Calu3 (cell line): ENCODE measurements at regions of chr10 and their contacts with region 1.

Region 1: DNA sequence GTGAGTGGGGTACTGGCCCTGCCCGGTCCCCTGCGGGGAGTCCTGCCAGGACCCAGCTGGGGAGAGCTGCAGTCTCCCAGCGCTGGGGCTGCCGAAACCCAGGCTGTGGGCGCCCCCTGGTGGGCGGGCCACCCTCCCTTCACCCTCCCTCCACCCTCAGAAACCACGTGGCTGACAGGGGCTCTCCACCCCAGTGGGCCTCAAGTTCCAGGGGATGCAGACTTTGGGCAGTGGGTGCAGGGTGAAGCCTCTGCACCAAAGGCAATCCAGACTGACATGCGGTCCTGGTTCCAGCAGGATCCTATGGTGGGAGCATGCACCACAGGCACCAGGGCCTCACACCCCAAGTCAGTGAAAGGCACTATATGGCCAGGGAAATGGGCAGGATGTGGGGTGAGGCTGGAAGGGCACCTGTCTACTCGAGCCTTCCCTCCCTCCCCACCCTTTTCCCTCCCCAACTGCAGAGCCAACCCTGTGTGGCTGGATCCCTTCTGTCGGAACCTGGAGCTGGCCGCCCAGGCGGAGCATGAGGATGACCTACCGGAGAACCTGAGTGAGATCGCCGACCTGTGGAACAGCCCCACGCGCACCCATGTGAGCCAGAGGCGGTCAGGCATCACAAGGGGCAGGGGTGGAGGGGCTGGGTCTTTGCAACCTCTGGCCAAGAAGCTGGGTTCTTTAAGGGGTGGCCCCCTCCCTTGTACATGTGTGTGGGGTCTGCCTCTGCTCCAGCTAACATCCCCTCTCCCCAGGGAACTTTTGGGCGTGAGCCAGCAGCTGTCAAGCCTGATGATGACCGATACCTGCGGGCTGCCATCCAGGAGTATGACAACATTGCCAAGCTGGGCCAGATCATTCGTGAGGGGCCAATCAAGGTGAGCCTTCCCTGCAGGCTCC is 38.8 kb downstream of the PSAP start:
- DNase-seq: peak; percentile 92
- H3K4me3 Mint-ChIP-seq: no peak overlapping the region
- H3K27ac Mint-ChIP-seq: no peak overlapping the region
- H3K4me1 Mint-ChIP-seq: no peaks in the 10 kb centered on the region
- H3K27me3 Mint-ChIP-seq: peaks cover 14% of the 10 kb centered on the region
- CTCF ChIP-seq: peak; percentile 97

Region 2: DNA sequence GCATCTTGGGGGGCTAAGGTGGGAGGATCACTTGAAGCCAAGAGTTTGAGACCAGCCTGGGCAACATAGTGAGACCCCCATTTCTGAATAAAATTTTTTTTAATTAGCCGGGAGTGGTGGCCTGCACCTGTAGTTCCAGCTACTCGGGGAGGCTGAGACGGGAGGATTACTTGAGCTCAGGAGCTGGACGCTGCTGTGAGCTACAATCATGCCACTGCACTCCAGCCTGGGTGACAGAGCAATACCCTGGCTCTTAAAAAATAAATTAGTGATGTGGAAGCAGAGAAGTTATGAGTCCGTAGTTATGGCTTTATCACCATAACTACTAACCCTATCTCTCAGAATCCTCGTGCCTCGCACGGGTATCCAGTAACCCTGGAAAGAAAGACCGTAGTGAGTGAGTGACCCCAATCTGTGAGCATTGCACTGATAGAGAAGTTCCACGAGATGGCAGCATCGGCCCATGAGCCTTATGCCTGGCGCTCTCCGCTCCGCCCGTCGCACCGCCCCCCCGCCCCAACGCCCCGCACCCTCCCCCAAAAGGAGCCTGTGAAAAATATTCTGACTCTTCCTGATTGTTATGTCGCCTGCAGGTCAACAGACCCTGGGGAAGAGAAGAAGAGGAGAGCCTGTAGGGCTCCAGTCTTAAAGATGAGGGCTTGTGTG is 498.1 kb before region 1 on chr10:
- CTCF ChIA-PET with region 1: interaction called, 8 read pairs
- intact Hi-C with region 1: loop called (anchors 2 kb)
- DNase-seq: peak; percentile 62
- H3K4me3 Mint-ChIP-seq: no peak overlapping the region
- H3K27ac Mint-ChIP-seq: no peak overlapping the region
- H3K4me1 Mint-ChIP-seq: peaks cover 10% of the 10 kb centered on the region
- H3K27me3 Mint-ChIP-seq: peaks cover 43% of the 10 kb centered on the region
- CTCF ChIP-seq: peak; percentile 93

Region 3: DNA sequence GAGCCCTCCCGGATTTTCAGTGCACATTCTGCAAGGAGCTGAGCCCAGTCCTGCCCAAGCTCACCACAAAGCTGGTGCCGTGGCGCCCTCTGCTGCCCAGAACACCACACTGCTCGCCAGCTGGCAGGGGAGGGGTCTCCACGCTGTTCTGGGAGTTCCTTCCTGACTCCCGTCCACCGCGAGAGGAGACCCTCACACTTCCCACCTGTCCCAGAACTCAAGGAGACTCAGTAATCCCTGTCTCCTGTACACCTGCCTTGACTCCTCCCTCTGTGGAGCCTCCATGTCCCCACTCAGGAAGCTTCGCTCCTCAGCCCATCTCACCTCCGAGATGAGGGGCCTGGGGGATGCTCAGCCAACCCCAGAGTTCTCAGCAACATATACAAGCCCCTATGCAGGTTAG is 104.0 kb before region 1 on chr10:
- CTCF ChIA-PET with region 1: interaction called, 13 read pairs
- intact Hi-C with region 1: no loop called
- DNase-seq: peak; percentile 73
- H3K4me3 Mint-ChIP-seq: no peak overlapping the region
- H3K27ac Mint-ChIP-seq: no peak overlapping the region
- H3K4me1 Mint-ChIP-seq: peaks cover 4% of the 10 kb centered on the region
- H3K27me3 Mint-ChIP-seq: peaks cover 2% of the 10 kb centered on the region
- CTCF ChIP-seq: peak; percentile 93

Region 4: GRCh38 chr10:71727738-71728737 is 84.2 kb before region 1 on chr10:
- CTCF ChIA-PET with region 1: interaction called, 10 read pairs
- intact Hi-C with region 1: loop called (anchors 5 kb)
- DNase-seq: peak; percentile 24
- H3K4me3 Mint-ChIP-seq: no peak overlapping the region
- H3K27ac Mint-ChIP-seq: no peak overlapping the region
- H3K4me1 Mint-ChIP-seq: peaks cover 26% of the 10 kb centered on the region
- H3K27me3 Mint-ChIP-seq: peaks cover under 1% of the 10 kb centered on the region
- CTCF ChIP-seq: no peak

Region 5: GRCh38 chr10:71766702-71767419 is 45.4 kb before region 1 on chr10:
- CTCF ChIA-PET with region 1: interaction called, 12 read pairs
- intact Hi-C with region 1: no loop called
- DNase-seq: peak; percentile 90
- H3K4me3 Mint-ChIP-seq: peak overlapping the region; percentile 65
- H3K27ac Mint-ChIP-seq: peak overlapping the region; percentile 87
- H3K4me1 Mint-ChIP-seq: peaks cover 61% of the 10 kb centered on the region
- H3K27me3 Mint-ChIP-seq: no peaks in the 10 kb centered on the region
- CTCF ChIP-seq: no peak